Psoas muscle (tissue), 8 donors: ENCODE measurements at regions of chr16 and their contacts with region 1.

Region 1: GRCh38 chr16:67068212-67068753 is 39.3 kb downstream of the CBFB start:
- DNase-seq: no peak
- ATAC-seq: no peak
- H3K4me3 ChIP-seq: no peak overlapping the region
- H3K27ac ChIP-seq: no peak overlapping the region
- H3K4me1 ChIP-seq: no peaks in the 10 kb centered on the region
- H3K27me3 ChIP-seq: no peaks in the 10 kb centered on the region
- CTCF ChIP-seq: no peak

Region 2: DNA sequence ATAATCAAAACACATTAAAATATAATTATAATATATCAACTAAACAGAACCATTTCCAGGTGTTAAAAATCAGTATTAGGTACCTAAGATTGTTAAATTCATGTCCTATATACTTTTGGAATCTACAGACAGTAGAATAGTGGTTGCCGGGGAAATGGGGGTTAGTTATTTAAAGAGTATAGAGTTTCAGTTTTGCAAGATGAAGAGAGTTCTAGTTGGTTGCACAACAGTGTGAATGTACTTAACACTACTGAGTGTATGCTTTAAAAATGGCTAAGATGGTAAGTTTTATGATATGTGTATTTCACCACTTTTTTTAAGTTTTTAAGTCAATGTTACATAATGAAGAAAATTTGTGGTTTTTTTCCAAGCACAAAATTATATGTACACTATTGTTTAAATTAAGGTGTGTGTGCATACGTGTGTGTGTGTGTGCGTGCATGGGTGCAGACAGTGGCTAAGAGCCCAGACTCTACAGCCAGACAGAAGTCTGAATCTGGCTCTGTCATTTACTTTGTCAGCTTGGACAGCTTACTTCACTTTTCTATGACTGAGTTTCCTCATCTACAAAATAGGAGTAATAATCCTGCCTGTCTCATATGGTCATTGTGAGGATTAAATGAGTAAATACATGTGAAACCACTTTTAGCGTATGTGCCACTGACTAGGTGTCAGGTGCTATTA is 16.2 kb after region 1 on chr16:
- intact Hi-C with region 1: loop called in 1 of 2 experiments (anchors 1 kb)
- DNase-seq: no peak
- ATAC-seq: peak in 2 of 4 donors; percentile 70 to 74
- H3K4me3 ChIP-seq: no peak overlapping the region
- H3K27ac ChIP-seq: peak overlapping the region; percentile 37
- H3K4me1 ChIP-seq: peaks cover 37% of the 10 kb centered on the region
- H3K27me3 ChIP-seq: no peaks in the 10 kb centered on the region
- CTCF ChIP-seq: no peak

Region 3: GRCh38 chr16:67129422-67129821 is 61.1 kb after region 1 on chr16:
- intact Hi-C with region 1: no loop called
- DNase-seq: no peak
- ATAC-seq: peak in 2 of 4 donors; percentile 16 to 22
- H3K4me3 ChIP-seq: no peak overlapping the region
- H3K27ac ChIP-seq: peak overlapping the region; percentile 53
- H3K4me1 ChIP-seq: peaks cover 36% of the 10 kb centered on the region
- H3K27me3 ChIP-seq: no peaks in the 10 kb centered on the region
- CTCF ChIP-seq: no peak